Motor neuron (in vitro differentiated cells): ENCODE measurements at regions of chr1 and their contacts with region 1.

Region 1: DNA sequence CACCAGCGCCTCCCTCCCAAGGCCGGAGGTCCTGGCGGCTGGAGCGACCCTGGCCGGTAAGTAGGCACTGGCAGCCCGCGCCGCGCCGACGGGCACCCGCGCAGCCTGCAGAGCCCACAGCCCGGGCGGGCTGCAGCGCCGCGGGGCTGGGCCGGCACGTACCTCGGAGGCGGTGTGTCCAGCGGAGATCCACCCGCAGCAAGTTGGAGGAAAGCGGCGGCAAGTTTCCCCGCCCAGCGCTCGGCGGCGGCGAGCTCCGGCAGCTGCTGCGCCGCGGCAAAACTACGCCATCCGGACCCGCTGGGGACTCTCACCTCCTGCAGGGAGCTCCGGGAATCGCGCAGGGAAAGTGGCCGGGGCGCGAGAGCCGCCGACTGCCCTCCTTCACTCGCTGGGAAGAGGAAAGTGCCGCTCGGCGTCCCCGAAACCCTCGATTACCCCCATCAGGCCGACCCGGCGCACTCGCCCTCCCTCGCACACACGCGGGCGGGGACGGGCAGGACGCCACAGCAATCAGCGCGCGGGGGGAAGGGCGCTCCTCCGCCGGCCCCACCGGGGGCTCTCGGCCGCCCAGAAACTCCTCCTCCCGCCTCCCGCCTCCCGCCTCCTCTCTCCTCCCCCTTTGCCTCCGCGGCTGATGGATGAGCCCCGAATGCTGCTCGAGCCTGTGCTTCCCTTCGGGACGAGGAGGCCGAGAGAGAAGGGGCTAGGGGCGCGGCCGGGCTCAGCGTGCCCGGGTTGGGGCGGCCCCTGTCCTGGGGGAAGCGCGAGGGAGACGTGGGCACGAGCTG is at the start of gene TGFBR3:
- ATAC-seq: peak; percentile 71 to 93 (median 90)
- H3K4me3 ChIP-seq: peak within 1 kb of the TSS; percentile 53 to 87 (median 61)
- H3K27ac ChIP-seq: peak within 1 kb of the TSS; percentile 11 to 39
- H3K4me1 ChIP-seq: peaks cover 0 to 4% of the 10 kb centered on the region in 2 donors
- total RNA-seq, gene TGFBR3: 3.5 to 57.8 (median 9.0) TPM

Region 2: GRCh38 chr1:91604632-91605031 is 281.3 kb before region 1 on chr1:
- in situ Hi-C with region 1: no loop called
- ATAC-seq: peak in 3 of 8 experiments; percentile 7 to 47 (median 47)
- H3K4me3 ChIP-seq: no peak overlapping the region
- H3K27ac ChIP-seq: no peak overlapping the region
- H3K4me1 ChIP-seq: peaks cover 7 to 10% of the 10 kb centered on the region in 2 donors

Region 3: DNA sequence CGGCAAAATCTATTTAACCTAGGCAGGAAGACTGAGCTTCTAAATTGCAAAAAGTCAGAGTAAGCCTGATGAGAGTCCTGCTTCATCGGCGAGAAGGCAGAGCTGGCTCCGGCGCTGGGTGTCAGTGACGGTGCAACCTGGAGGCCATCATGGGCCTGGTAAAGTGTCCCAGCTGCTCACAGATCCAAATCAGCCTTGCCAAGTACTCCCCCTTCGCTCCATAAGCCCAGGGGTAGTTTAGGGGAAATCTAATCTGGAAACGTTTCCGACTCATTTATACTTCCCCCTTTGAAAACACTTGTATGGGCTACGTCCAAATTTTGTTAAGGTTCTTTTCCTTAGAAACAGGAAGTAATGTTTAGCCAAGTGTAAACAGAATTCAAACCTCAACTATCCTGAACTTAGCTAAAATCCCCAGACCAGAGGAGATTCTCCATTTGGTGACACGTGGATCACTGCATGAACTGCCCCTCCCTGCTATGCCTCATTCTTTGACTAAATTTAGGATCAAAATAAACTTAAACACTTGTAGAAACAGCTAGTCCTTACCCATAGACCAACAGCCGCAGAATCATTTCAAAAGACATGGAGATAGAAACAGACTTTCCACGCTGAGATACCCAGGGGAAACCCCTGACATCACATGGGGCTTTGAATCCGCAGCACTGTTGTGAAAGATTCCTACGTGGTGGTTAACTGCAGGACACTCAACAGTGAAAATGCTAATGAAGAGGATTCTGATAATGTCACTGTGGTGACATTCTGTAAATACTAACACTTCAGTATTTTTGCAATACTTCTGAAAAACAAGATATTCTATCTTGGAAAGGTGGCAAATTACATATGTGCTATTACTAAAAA is 172.7 kb before region 1 on chr1:
- in situ Hi-C with region 1: loop called in 1 of 9 experiments (anchors 25 kb)
- ATAC-seq: peak in 7 of 8 experiments; percentile 57 to 90 (median 74)
- H3K4me3 ChIP-seq: no peak overlapping the region
- H3K27ac ChIP-seq: no peak overlapping the region
- H3K4me1 ChIP-seq: peaks cover 5 to 9% of the 10 kb centered on the region in 2 donors